Caco-2 (cell line): ENCODE measurements at regions of chrX and their contacts with region 1.

Region 1: DNA sequence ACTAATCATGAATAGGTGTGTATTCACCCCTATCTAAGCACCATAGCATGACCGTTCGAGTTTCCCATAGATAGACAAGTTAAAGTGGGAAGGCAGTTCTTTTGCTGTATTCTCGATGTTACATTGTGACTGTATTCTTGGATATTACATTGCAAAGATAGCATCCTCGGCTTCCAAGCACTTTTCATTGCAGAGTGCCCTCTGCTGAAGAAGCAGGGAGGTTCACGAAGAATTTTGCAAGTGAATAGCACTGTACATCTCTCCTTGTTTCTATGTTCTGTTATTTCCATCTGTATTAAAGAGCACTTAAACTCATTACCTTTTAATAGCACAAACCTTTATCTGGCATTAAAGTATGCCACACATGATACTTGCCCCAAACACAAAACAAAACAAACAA is 426.7 kb upstream of the ARX start:
- DNase-seq: no peak
- H3K4me3 ChIP-seq: no peak overlapping the region
- H3K4me3 Mint-ChIP-seq: no peak overlapping the region
- H3K27ac Mint-ChIP-seq: no peak overlapping the region
- H3K4me1 ChIP-seq: no peaks in the 10 kb centered on the region
- H3K4me1 Mint-ChIP-seq: no peaks in the 10 kb centered on the region
- H3K27me3 ChIP-seq: no peaks in the 10 kb centered on the region
- H3K27me3 Mint-ChIP-seq: peaks cover 5% of the 10 kb centered on the region
- CTCF ChIP-seq: peak in 1 of 2 experiments; percentile 20

Region 2: DNA sequence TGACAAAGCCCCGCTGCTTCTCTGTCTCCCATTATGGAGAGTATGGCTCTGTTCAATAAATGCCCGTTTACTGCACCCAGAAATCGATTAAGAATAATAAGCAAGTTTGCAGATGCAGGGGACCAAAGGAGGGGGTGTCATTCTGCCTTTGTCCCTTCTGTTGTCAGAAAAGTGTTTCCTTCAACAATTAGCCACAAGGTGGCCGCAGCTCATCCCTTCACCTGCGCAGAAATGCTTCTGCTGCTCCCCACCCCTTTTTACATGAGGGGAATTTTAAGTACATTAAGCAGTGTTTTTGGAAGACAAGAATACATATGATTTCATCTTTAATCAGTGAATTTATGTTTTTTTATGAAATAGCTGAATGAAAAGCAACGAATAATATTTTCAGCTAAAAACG is 251.1 kb before region 1 on chrX:
- CTCF ChIA-PET with region 1: no interaction called
- POLR2A ChIA-PET with region 1: no interaction called
- intact Hi-C with region 1: loop called (anchors 2 kb)
- DNase-seq: peak in 1 of 2 experiments; percentile 4
- H3K4me3 ChIP-seq: no peak overlapping the region
- H3K4me3 Mint-ChIP-seq: no peak overlapping the region
- H3K27ac Mint-ChIP-seq: no peak overlapping the region
- H3K4me1 ChIP-seq: no peaks in the 10 kb centered on the region
- H3K4me1 Mint-ChIP-seq: no peaks in the 10 kb centered on the region
- H3K27me3 ChIP-seq: no peaks in the 10 kb centered on the region
- H3K27me3 Mint-ChIP-seq: peaks cover 14% of the 10 kb centered on the region
- CTCF ChIP-seq: peak; percentile 16 to 36

Region 3: DNA sequence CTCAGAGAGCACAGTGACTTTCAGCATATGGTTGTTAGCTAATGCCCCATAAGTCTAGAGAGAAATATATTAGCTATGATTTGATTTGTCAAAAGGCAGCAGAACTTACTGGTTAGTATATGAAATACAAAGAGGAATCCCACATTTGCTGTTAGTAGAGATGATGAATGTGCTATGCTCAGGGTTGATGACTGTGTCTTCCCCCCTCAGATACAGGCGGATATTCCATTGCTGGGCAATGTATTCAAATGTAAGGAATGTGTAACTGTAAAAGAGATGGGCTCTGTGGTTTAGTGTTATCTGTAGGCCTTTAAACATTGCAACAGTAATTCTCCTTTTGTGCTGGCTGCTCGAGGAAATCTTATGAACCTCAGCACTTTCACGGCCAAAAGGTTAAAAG is 102.1 kb after region 1 on chrX:
- CTCF ChIA-PET with region 1: no interaction called
- POLR2A ChIA-PET with region 1: no interaction called
- intact Hi-C with region 1: no loop called
- DNase-seq: no peak
- H3K4me3 ChIP-seq: no peak overlapping the region
- H3K4me3 Mint-ChIP-seq: no peak overlapping the region
- H3K27ac Mint-ChIP-seq: no peak overlapping the region
- H3K4me1 ChIP-seq: no peaks in the 10 kb centered on the region
- H3K4me1 Mint-ChIP-seq: no peaks in the 10 kb centered on the region
- H3K27me3 ChIP-seq: no peaks in the 10 kb centered on the region
- H3K27me3 Mint-ChIP-seq: peaks cover 3% of the 10 kb centered on the region
- CTCF ChIP-seq: no peak

Region 4: DNA sequence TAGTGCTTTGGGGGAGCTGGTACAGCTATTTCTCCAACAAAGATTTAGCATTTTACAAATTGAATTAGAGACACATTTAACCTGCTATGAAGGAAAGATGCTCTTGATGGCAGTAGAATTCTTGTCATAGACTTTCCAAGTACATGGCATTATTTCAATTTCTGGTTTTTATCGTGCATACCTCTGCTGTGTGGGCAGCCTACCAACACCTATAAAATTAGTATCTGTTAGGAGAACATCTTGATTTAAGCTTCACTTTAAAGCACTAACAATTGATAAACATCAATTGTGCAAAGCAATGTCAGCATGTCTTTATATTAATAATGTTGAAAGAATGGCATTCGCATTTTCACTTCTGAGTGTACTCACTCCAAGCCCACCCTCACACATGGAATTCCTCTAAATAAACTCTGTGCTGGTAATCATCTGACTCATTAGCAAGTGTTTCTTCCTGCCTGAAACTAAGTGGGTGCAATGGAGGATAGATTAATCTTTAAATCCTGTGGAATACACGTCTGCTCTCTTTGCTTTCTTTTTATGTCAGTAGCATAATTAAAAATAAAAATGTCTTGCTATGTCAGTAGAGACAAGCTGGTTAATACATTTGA is 415.9 kb after region 1 on chrX:
- CTCF ChIA-PET with region 1: no interaction called
- POLR2A ChIA-PET with region 1: no interaction called
- intact Hi-C with region 1: no loop called
- DNase-seq: no peak
- H3K4me3 ChIP-seq: no peak overlapping the region
- H3K4me3 Mint-ChIP-seq: no peak overlapping the region
- H3K27ac Mint-ChIP-seq: no peak overlapping the region
- H3K4me1 ChIP-seq: no peaks in the 10 kb centered on the region
- H3K4me1 Mint-ChIP-seq: no peaks in the 10 kb centered on the region
- H3K27me3 ChIP-seq: no peaks in the 10 kb centered on the region
- H3K27me3 Mint-ChIP-seq: peaks cover 6% of the 10 kb centered on the region
- CTCF ChIP-seq: no peak